Activated CD8-positive, alpha-beta T cell treated with anti-CD3 and anti-CD28 coated beads, Interleukin-2, amount 10 ng/mL, durations not matched to agents 7 days and 5 days (primary cell): ENCODE measurements at regions of chrX and their contacts with region 1.

Region 1: GRCh38 chrX:109485470-109486340 is 3.8 kb upstream of the GUCY2F start:
- DNase-seq: peak; percentile 71
- ATAC-seq: peak; percentile 23
- H3K4me3 Mint-ChIP-seq: no peak overlapping the region
- H3K27ac Mint-ChIP-seq: no peak overlapping the region
- H3K4me1 Mint-ChIP-seq: no peaks in the 10 kb centered on the region
- H3K27me3 Mint-ChIP-seq: peaks cover 6% of the 10 kb centered on the region

Region 2: DNA sequence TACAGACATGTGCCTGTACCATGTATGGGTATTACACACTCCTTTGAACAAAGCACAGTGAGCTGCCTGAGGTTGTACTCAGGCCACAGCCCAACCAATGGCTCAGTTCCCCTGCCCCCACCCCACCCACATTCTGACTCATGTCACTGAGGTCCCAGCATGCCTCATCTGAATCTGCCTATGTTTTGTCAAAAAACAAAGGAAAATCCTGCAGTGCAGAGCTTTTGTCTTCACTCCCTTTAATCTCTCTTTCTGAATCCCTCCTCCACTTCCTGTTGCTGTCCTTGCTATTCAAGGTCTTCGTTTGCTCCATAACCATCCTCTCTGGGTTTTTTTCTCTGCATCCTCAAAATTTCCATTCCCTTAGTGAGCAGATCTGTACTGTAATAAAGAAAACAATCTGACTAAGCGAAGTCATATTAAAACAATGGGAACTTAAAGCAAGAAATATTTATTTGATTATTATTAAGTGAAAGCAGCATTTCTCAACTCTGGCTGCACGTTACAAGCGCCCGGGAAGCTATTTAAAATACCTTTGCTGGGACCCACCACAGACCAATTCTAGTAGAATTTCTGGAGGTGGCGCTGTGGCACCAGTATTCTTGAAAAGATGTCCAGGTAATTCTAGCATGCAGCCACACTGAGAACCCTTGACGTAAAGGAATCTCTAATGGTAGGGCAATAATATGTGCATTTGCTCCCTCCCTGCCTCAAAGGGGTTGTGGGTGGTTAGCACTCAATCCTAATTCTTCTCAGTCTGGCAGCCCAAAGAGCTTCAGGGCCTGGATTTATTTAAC is 12.6 kb before region 1 on chrX:
- CTCF ChIA-PET with region 1: interaction called, 19 read pairs
- POLR2A ChIA-PET with region 1: no interaction called
- DNase-seq: no peak
- ATAC-seq: no peak
- H3K4me3 Mint-ChIP-seq: no peak overlapping the region
- H3K27ac Mint-ChIP-seq: no peak overlapping the region
- H3K4me1 Mint-ChIP-seq: no peaks in the 10 kb centered on the region
- H3K27me3 Mint-ChIP-seq: no peaks in the 10 kb centered on the region

Region 3: DNA sequence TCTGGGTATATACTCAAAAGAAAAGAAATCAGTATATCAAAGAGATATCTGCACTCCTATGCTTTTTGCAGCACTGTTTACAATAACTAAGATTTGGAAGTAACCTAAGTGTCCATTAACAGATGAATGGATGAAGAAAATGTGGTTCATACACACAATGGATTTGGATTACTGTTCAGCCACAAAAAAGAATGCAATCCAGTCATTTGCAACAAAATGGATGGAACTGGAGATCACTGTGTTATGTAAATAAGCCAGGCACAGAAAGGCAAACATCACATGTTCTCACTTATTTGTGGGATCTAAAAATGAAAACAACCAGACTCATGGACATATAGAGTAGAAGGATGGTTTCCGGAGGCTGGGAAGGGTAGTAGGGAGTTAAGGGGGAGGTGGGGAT is 33.3 kb after region 1 on chrX:
- CTCF ChIA-PET with region 1: no interaction called
- POLR2A ChIA-PET with region 1: no interaction called
- DNase-seq: no peak
- ATAC-seq: no peak
- H3K4me3 Mint-ChIP-seq: no peak overlapping the region
- H3K27ac Mint-ChIP-seq: no peak overlapping the region
- H3K4me1 Mint-ChIP-seq: no peaks in the 10 kb centered on the region
- H3K27me3 Mint-ChIP-seq: peaks cover 5% of the 10 kb centered on the region

Region 4: GRCh38 chrX:109635176-109635575 is 149.5 kb after region 1 on chrX:
- CTCF ChIA-PET with region 1: interaction called, 29 read pairs
- POLR2A ChIA-PET with region 1: no interaction called
- DNase-seq: no peak
- ATAC-seq: no peak
- H3K4me3 Mint-ChIP-seq: no peak overlapping the region
- H3K27ac Mint-ChIP-seq: no peak overlapping the region
- H3K4me1 Mint-ChIP-seq: peaks cover 22% of the 10 kb centered on the region
- H3K27me3 Mint-ChIP-seq: no peaks in the 10 kb centered on the region